ENCODE measurements at regions of chr10 and their contacts with region 1.

Region 1: GRCh38 chr10:119686439-119687191 is 35.4 kb downstream of the BAG3 start:
- DNase-seq: peak; percentile 61 to 83 (median 66)
- ATAC-seq: peak; percentile 90
- H3K4me3 ChIP-seq: no peak overlapping the region
- H3K27ac ChIP-seq: no peak overlapping the region
- H3K4me1 ChIP-seq: peaks cover 9 to 10% of the 10 kb centered on the region in 2 experiments; a peak in 4 of 5 replicates
- H3K27me3 ChIP-seq: no peaks in the 10 kb centered on the region
- CTCF ChIP-seq: peak; percentile 71 to 80 (median 74)
- EP300 ChIP-seq: no peak
- POLR2A ChIP-seq: no peak
- RAD21 ChIP-seq: peak; percentile 77 to 82

Region 2: GRCh38 chr10:119616882-119617570 is 69.6 kb before region 1 on chr10:
- CTCF ChIA-PET with region 1: no interaction called
- POLR2A ChIA-PET with region 1: no interaction called
- in situ Hi-C with region 1: no loop called
- intact Hi-C with region 1: loop called (anchors 5 kb)
- DNase-seq: peak; percentile 49 to 75 (median 51)
- ATAC-seq: peak; percentile 94
- H3K4me3 ChIP-seq: peak overlapping the region; percentile 28
- H3K27ac ChIP-seq: peak overlapping the region; percentile 60
- H3K4me1 ChIP-seq: peaks cover 0 to 8% of the 10 kb centered on the region in 2 experiments; a peak in 3 of 5 replicates
- H3K27me3 ChIP-seq: no peaks in the 10 kb centered on the region
- CTCF ChIP-seq: peak; percentile 74 to 82 (median 75)
- EP300 ChIP-seq: no peak
- POLR2A ChIP-seq: 0 out of 2 replicates have a peak, but pooled peaks have one; percentile 38
- RAD21 ChIP-seq: peak; percentile 55 to 63

Region 3: GRCh38 chr10:119633538-119634218 is 52.9 kb before region 1 on chr10:
- CTCF ChIA-PET with region 1: no interaction called
- POLR2A ChIA-PET with region 1: no interaction called
- in situ Hi-C with region 1: no loop called
- intact Hi-C with region 1: no loop called
- DNase-seq: no peak
- ATAC-seq: no peak
- H3K4me3 ChIP-seq: no peak overlapping the region
- H3K27ac ChIP-seq: no peak overlapping the region
- H3K4me1 ChIP-seq: no peaks in the 10 kb centered on the region
- H3K27me3 ChIP-seq: no peaks in the 10 kb centered on the region
- CTCF ChIP-seq: no peak
- EP300 ChIP-seq: no peak
- POLR2A ChIP-seq: no peak
- RAD21 ChIP-seq: no peak

Region 4: GRCh38 chr10:119725828-119726675 is 39.4 kb after region 1 on chr10 and contains the start of gene INPP5F:
- CTCF ChIA-PET with region 1: no interaction called
- POLR2A ChIA-PET with region 1: no interaction called
- in situ Hi-C with region 1: no loop called
- intact Hi-C with region 1: loop called (anchors 5 kb)
- DNase-seq: peak; percentile 96 to 99 (median 97)
- ATAC-seq: peak; percentile 95
- H3K4me3 ChIP-seq: peak within 1 kb of the TSS; percentile 86
- H3K27ac ChIP-seq: peak within 1 kb of the TSS; percentile 96
- H3K4me1 ChIP-seq: peaks cover 13 to 18% of the 10 kb centered on the region in 2 experiments
- H3K27me3 ChIP-seq: no peaks in the 10 kb centered on the region
- CTCF ChIP-seq: peak in 2 of 3 experiments; percentile 33 to 39; a peak in 3 of 6 replicates
- EP300 ChIP-seq: no peak
- POLR2A ChIP-seq: no peak
- RAD21 ChIP-seq: peak; percentile 13 to 19; a peak in 1 of 4 replicates
- polyA plus RNA-seq, gene INPP5F: 1.6 to 1.7 TPM

Region 5: GRCh38 chr10:119750391-119751230 is 64.0 kb after region 1 on chr10:
- CTCF ChIA-PET with region 1: no interaction called
- POLR2A ChIA-PET with region 1: no interaction called
- in situ Hi-C with region 1: no loop called
- intact Hi-C with region 1: loop called (anchors 1 kb)
- DNase-seq: peak; percentile 37 to 72 (median 52)
- ATAC-seq: peak; percentile 98
- H3K4me3 ChIP-seq: no peak overlapping the region
- H3K27ac ChIP-seq: no peak overlapping the region
- H3K4me1 ChIP-seq: peaks cover 0 to 6% of the 10 kb centered on the region in 2 experiments; a peak in 3 of 5 replicates
- H3K27me3 ChIP-seq: no peaks in the 10 kb centered on the region
- CTCF ChIP-seq: peak; percentile 70 to 84 (median 84)
- EP300 ChIP-seq: no peak
- POLR2A ChIP-seq: no peak
- RAD21 ChIP-seq: peak; percentile 89 to 93

Region 6: DNA sequence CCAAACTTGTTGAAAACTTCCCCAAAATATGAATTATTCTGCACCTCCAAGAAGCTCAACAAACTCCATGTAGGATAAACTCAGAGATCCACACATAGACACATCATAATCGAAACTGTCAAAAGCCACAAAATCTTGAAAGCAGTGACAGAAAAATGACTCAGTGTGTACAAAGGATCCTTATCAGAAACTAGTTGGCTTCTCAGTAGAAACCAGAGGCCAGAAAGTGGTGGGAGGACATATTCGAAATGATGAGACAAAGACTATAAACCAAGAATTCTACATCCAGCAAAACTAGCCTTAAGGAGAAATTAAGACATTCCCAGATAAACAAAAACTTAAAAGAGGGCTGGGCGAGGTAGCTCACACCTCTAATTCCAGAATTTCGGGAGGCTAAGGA is 147.6 kb after region 1 on chr10:
- CTCF ChIA-PET with region 1: no interaction called
- POLR2A ChIA-PET with region 1: no interaction called
- in situ Hi-C with region 1: no loop called
- intact Hi-C with region 1: loop called (anchors 5 kb)
- DNase-seq: peak in 2 of 4 experiments; percentile 23 to 48
- ATAC-seq: peak; percentile 61
- H3K4me3 ChIP-seq: no peak overlapping the region
- H3K27ac ChIP-seq: peak overlapping the region; percentile 28; the same call in 1 of the 3 replicates
- H3K4me1 ChIP-seq: peaks cover 0 to 3% of the 10 kb centered on the region in 2 experiments; a peak in 3 of 5 replicates
- H3K27me3 ChIP-seq: no peaks in the 10 kb centered on the region
- CTCF ChIP-seq: no peak
- EP300 ChIP-seq: peak; percentile 37; the same call in 1 of the 2 replicates
- POLR2A ChIP-seq: no peak
- RAD21 ChIP-seq: no peak

Region 7: GRCh38 chr10:119859420-119860258 is 173.0 kb after region 1 on chr10:
- CTCF ChIA-PET with region 1: interaction called, 6 read pairs
- POLR2A ChIA-PET with region 1: interaction called, 3 read pairs
- in situ Hi-C with region 1: loop called (anchors 5 kb)
- intact Hi-C with region 1: loop called (anchors 2 kb)
- DNase-seq: peak in 1 of 4 experiments; percentile 37
- ATAC-seq: peak; percentile 70
- H3K4me3 ChIP-seq: no peak overlapping the region
- H3K27ac ChIP-seq: no peak overlapping the region
- H3K4me1 ChIP-seq: no peaks in the 10 kb centered on the region
- H3K27me3 ChIP-seq: no peaks in the 10 kb centered on the region
- CTCF ChIP-seq: peak in 1 of 3 experiments; percentile 64; a peak in 4 of 6 replicates
- EP300 ChIP-seq: no peak
- POLR2A ChIP-seq: no peak
- RAD21 ChIP-seq: peak; percentile 75 to 80

Region 8: DNA sequence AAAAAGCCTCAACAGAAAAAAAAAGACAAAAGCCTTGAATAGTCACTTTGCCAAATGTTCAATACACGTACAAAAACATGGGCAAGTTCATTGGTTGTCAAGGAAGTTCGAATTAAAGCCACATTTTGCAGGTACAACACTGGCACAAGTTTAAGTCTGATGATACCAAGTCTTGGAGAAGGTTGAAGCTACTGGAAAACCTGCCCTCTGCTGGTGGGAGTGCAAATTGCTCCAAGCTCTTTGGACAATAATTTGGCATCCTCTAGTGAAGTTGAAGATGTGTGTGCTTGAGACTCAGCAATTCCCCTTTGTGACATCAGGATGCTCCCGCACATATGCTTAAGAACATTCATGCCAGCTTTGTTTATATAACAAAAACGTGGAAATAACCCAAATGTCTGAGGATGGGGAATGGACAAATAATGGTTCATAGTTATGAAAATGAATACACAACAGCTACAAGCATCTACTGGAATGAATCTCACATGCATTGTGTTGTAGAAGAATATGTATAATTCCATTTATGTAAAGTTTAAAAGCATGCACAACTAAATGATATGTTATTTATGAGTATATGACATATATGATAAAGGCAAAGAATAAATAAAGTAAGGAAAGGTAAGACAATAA is 650.4 kb after region 1 on chr10:
- CTCF ChIA-PET with region 1: no interaction called
- POLR2A ChIA-PET with region 1: no interaction called
- in situ Hi-C with region 1: no loop called
- intact Hi-C with region 1: loop called (anchors 5 kb)
- DNase-seq: peak; percentile 11 to 41 (median 24)
- ATAC-seq: 0 out of 3 replicates have a peak, but pooled peaks have one; percentile 49
- H3K4me3 ChIP-seq: no peak overlapping the region
- H3K27ac ChIP-seq: no peak overlapping the region
- H3K4me1 ChIP-seq: no peaks in the 10 kb centered on the region
- H3K27me3 ChIP-seq: no peaks in the 10 kb centered on the region
- CTCF ChIP-seq: peak; percentile 55 to 65 (median 61); a peak in 5 of 6 replicates
- EP300 ChIP-seq: no peak
- POLR2A ChIP-seq: no peak
- RAD21 ChIP-seq: peak; percentile 38 to 62

Measured in K562 (cell line).